K562 (cell line): ENCODE measurements at regions of chr7 and their contacts with region 1.

Region 1: DNA sequence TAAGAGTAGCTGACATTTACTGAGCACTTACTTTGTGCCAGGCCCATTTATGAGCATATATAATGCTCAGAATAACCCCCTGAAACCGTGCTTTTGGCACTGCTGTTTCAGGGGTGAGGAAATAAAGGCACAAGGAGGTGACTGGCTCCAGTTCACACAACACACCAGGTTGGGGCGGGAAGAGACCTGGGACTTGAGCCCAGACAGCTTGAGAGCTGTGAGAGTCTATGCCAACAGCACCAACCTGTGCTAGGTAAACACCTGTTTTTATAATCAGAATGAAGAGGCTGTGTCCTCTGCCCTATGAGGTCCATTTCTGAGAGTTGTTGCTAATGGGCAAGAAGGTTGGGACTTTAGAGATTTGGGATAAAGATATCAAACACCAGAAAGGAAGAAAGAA is 8.8 kb upstream of the AZGP1 start:
- DNase-seq: no peak
- ATAC-seq: no peak
- H3K4me3 ChIP-seq: no peak overlapping the region
- H3K27ac ChIP-seq: no peak overlapping the region
- H3K4me1 ChIP-seq: peaks cover under 1% of the 10 kb centered on the region in 2 experiments; a peak in 2 of 5 replicates
- H3K27me3 ChIP-seq: peaks cover 31 to 68% of the 10 kb centered on the region in 2 experiments
- CTCF ChIP-seq: no peak
- EP300 ChIP-seq: no peak
- POLR2A ChIP-seq: no peak
- RAD21 ChIP-seq: no peak

Region 2: GRCh38 chr7:99752390-99752789 is 232.2 kb before region 1 on chr7:
- CTCF ChIA-PET with region 1: no interaction called
- POLR2A ChIA-PET with region 1: no interaction called
- in situ Hi-C with region 1: no loop called
- intact Hi-C with region 1: no loop called
- DNase-seq: peak in 1 of 4 experiments; percentile 32
- ATAC-seq: peak; percentile 75
- H3K4me3 ChIP-seq: no peak overlapping the region
- H3K27ac ChIP-seq: no peak overlapping the region
- H3K4me1 ChIP-seq: peaks cover 0 to 9% of the 10 kb centered on the region in 2 experiments; a peak in 4 of 5 replicates
- H3K27me3 ChIP-seq: no peaks in the 10 kb centered on the region; a peak in 1 of 5 replicates
- CTCF ChIP-seq: no peak
- EP300 ChIP-seq: no peak
- POLR2A ChIP-seq: no peak
- RAD21 ChIP-seq: no peak

Region 3: GRCh38 chr7:99938296-99938695 is 46.3 kb before region 1 on chr7:
- CTCF ChIA-PET with region 1: no interaction called
- POLR2A ChIA-PET with region 1: interaction called, 3 read pairs
- in situ Hi-C with region 1: loop called (anchors 5 kb)
- intact Hi-C with region 1: no loop called
- DNase-seq: no peak
- ATAC-seq: no peak
- H3K4me3 ChIP-seq: no peak overlapping the region
- H3K27ac ChIP-seq: no peak overlapping the region
- H3K4me1 ChIP-seq: peaks cover 0 to 7% of the 10 kb centered on the region in 2 experiments; a peak in 3 of 5 replicates
- H3K27me3 ChIP-seq: no peaks in the 10 kb centered on the region
- CTCF ChIP-seq: no peak
- EP300 ChIP-seq: no peak
- POLR2A ChIP-seq: no peak
- RAD21 ChIP-seq: no peak

Region 4: DNA sequence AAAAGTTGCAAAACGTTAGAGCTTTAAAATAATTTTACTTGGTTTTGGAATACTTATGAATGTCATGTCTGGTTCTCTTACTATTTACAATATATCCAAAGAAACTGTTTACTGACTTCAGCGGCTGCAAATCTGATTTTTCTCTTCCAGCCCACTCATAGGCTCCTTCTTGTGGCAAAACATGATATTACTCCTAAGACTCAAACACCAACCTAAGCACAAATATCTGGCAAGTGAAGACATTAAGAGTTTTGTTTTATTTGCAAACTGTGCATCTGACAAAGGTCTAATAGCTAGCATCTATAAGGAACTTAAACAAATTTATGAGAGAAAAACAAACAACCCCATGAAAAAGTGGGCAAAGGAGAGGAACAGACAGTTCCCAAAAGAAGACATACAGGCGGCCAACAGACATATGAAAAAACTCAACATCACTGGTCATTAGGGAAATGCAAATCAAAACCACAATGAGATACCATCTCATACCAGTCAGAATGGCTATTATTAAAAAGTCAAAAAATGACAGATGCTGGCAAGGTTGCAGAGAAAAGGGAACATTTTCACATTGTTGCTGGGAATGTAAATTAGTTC is 34.9 kb before region 1 on chr7:
- CTCF ChIA-PET with region 1: no interaction called
- POLR2A ChIA-PET with region 1: no interaction called
- in situ Hi-C with region 1: no loop called
- intact Hi-C with region 1: no loop called
- DNase-seq: peak in 1 of 4 experiments; percentile 17
- ATAC-seq: no peak
- H3K4me3 ChIP-seq: no peak overlapping the region
- H3K27ac ChIP-seq: no peak overlapping the region
- H3K4me1 ChIP-seq: no peaks in the 10 kb centered on the region
- H3K27me3 ChIP-seq: peaks cover 6 to 8% of the 10 kb centered on the region in 2 experiments; a peak in 2 of 5 replicates
- CTCF ChIP-seq: peak; percentile 25 to 49 (median 37); a peak in 4 of 6 replicates
- EP300 ChIP-seq: no peak
- POLR2A ChIP-seq: no peak
- RAD21 ChIP-seq: peak in 1 of 2 experiments; percentile 30; a peak in 2 of 4 replicates